ENCODE measurements at regions of chr2 and their contacts with region 1.

Region 1: DNA sequence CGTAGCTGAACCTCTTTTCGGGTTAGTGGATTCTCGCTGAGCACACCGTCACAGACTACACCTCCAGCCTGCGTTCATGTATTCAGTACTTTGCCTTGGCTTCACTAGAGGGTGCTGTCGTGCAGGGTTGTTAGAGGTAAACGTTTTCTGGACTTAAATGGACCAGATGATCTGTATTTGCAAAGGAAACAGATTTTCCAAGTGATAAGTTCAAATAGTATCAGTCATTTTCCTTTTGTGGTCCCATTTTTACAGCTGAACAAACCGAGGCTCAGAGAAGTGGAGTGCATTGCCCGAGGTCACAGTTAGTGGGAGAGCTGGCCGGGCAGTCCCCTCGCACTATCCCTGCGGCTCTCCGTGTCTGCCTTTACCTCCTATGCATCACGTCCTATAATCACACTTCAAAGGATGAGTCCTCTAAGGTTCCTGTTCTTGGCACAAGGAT is 125.9 kb downstream of the MAP4K4 start:
- DNase-seq: peak; percentile 34
- CTCF ChIP-seq: peak; percentile 80

Region 2: GRCh38 chr2:101837354-101837753 is 14.0 kb after region 1 on chr2:
- CTCF ChIA-PET with region 1: interaction called, 29 read pairs
- POLR2A ChIA-PET with region 1: no interaction called
- DNase-seq: no peak
- CTCF ChIP-seq: no peak